HepG2 (cell line): ENCODE measurements at regions of chr18 and their contacts with region 1.

Region 1: DNA sequence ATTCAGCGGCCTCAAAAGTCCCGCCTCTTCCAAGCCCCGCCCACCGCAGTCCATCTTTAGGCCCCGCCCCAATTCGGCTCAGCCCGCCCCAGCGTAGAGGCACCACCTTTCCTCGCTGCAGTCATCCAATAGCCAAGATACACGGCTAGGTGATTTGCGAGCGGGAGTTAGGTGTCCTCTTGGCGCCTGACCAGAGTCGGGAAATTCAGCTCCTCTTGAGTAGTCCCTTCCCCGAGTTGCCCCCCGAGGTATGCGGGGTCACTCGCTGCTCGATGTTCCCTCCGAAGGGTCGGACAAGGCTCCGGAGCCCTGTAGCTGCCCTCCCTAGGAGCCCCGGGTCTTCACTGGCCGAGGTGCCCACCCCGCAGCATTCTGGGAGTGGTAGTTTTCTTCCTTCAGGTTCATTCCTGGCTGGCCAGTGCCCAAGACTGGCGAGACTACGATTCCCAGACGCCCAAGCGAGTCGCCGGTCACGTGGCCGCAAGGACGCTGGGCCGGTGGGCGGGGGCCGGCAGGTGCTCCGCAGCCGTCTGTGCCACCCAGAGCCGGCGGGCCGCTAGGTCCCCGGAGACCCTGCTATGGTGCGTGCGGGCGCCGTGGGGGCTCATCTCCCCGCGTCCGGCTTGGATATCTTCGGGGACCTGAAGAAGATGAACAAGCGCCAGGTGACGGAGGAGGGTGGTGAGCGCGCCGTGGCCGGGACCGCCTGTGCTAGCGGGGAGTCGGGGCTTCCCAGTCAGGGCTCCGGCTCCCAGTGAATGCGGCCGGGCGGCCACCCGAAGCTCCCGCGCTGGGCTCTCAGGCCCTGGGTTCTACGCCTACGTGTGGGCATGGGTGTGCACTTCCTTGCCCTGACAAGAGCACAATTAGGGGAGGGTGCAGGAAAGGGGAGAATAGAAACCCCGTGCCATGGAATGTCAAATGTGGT is at the start of gene SEC11C:
- DNase-seq: peak; percentile 95
- ATAC-seq: peak; percentile 88
- H3K4me3 ChIP-seq: peak within 1 kb of the TSS; percentile 83 to 98 (median 86)
- H3K27ac ChIP-seq: peak within 1 kb of the TSS; percentile 83
- H3K4me1 ChIP-seq: peaks cover 33% of the 10 kb centered on the region
- H3K27me3 ChIP-seq: no peaks in the 10 kb centered on the region; a peak in 1 of 5 replicates
- CTCF ChIP-seq: 0 out of 2 replicates have a peak, but pooled peaks have one; percentile 3
- EP300 ChIP-seq: no peak
- POLR2A ChIP-seq: peak; percentile 51 to 62
- RAD21 ChIP-seq: no peak; the same call in 1 of the 2 replicates
- total RNA-seq, gene SEC11C: 211 and 297 TPM in 2 replicates

Region 2: DNA sequence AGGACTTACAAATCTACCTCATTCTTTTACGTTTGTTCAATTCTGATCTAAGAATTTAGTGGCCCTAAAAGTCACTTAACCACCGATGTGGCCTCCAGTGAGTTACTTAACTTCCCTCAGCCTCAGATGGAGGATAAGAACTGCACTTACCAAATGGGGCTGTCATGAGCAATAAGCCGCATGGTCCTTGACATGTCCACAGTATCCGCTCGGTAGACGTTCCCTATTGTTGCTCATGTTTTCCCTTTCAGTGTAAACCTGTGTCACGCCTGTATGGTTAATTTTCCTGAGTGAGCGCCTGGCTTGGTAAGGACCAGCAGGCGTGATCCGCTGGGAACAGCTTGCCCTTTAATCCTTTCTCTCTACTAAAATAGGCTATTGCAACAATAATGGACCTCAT is 20.4 kb after region 1 on chr18:
- CTCF ChIA-PET with region 1: no interaction called
- POLR2A ChIA-PET with region 1: no interaction called
- in situ Hi-C with region 1: no loop called
- intact Hi-C with region 1: loop called (anchors 2 kb)
- DNase-seq: no peak
- ATAC-seq: no peak
- H3K4me3 ChIP-seq: no peak overlapping the region
- H3K27ac ChIP-seq: no peak overlapping the region
- H3K4me1 ChIP-seq: peaks cover 14% of the 10 kb centered on the region; the same call in 1 of the 2 replicates
- H3K27me3 ChIP-seq: no peaks in the 10 kb centered on the region
- CTCF ChIP-seq: no peak
- EP300 ChIP-seq: no peak
- POLR2A ChIP-seq: no peak
- RAD21 ChIP-seq: no peak

Region 3: DNA sequence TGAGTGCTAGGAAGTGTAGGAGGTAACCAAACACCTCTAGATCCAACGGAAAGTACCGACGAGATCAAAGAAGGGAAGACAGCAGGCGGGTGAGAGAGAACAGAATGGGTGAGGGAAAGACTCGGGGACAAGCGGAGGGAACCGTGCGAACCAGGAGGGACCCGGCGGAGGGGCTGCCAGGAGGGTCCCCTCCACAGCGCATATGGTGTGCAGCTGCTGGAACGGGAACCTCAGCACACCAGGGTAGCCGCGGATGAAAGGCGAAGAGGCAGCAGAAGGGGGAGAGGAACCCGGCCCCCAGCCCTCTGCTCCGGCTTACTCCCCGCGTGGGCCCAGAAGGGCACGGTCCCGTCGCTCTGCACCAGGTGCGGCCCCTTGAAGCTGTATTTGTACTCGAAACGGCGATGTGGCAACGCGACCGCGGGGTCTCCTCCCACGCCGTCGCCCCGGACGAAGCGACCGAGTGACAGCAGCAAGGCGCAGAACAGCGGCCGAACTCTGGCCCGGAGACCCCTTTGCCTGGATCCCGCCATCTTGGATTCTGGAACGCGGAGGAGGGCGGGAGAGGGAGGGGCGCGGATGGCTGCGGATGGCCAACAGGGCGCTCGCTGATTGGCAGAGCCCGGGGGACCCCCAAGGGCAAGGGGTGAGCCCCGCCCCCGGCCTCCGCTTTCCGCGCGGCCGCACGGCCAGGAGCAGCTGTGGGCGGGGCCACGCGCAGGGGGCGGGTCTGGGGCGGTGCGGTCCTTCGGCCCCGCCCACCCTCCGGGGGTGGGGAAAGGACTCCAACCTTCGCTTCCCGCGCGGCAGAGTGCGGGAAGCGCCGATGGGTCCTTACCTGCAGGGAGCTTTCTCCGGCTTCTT is 219.3 kb after region 1 on chr18 and contains the start of gene LMAN1:
- CTCF ChIA-PET with region 1: no interaction called
- POLR2A ChIA-PET with region 1: interaction called, 4 read pairs
- in situ Hi-C with region 1: no loop called
- intact Hi-C with region 1: loop called (anchors 1 kb)
- DNase-seq: peak; percentile 85
- ATAC-seq: peak; percentile 96
- H3K4me3 ChIP-seq: peak within 1 kb of the TSS; percentile 97 to 100 (median 98)
- H3K27ac ChIP-seq: peak within 1 kb of the TSS; percentile 98
- H3K4me1 ChIP-seq: peaks cover 43% of the 10 kb centered on the region
- H3K27me3 ChIP-seq: peaks cover 0 to 4% of the 10 kb centered on the region in 2 experiments; a peak in 1 of 5 replicates
- CTCF ChIP-seq: 0 out of 2 replicates have a peak, but pooled peaks have one; percentile 7
- EP300 ChIP-seq: no peak
- POLR2A ChIP-seq: peak; percentile 76 to 89
- RAD21 ChIP-seq: no peak
- total RNA-seq, gene LMAN1: 79.1 and 131 TPM in 2 replicates